Right ventricle myocardium superior (tissue), 1 donor: ENCODE measurements at regions of chr11 and their contacts with region 1.

Region 1: GRCh38 chr11:2428322-2428795 is 16.0 kb downstream of the TRPM5 start:
- DNase-seq: peak; percentile 87
- ATAC-seq: peak; percentile 90

Region 2: GRCh38 chr11:2532704-2533586 is 104.6 kb after region 1 on chr11:
- intact Hi-C with region 1: loop called (anchors 2 kb)
- DNase-seq: peak; percentile 93
- ATAC-seq: peak; percentile 89